ENCODE measurements at regions of chr13 and their contacts with region 1.

Region 1: GRCh38 chr13:41652727-41653361 is 195.5 kb downstream of the RGCC start:
- DNase-seq: no peak
- ATAC-seq: peak in 1 of 4 donors; percentile 66
- H3K4me3 ChIP-seq: no peak overlapping the region
- H3K27ac ChIP-seq: no peak overlapping the region
- H3K4me1 ChIP-seq: no peaks in the 10 kb centered on the region
- H3K27me3 ChIP-seq: no peaks in the 10 kb centered on the region
- CTCF ChIP-seq: peak; percentile 54

Region 2: GRCh38 chr13:41352935-41353840 is 299.7 kb before region 1 on chr13:
- intact Hi-C with region 1: loop called (anchors 5 to 10 kb)
- DNase-seq: no peak
- ATAC-seq: peak in 2 of 4 donors; percentile 48 to 49
- H3K4me3 ChIP-seq: no peak overlapping the region
- H3K27ac ChIP-seq: no peak overlapping the region
- H3K4me1 ChIP-seq: peaks cover 8% of the 10 kb centered on the region
- H3K27me3 ChIP-seq: no peaks in the 10 kb centered on the region
- CTCF ChIP-seq: peak; percentile 85

Region 3: GRCh38 chr13:41456768-41457588 is 195.9 kb before region 1 on chr13 and contains the start of gene RGCC:
- intact Hi-C with region 1: loop called (anchors 5 to 10 kb)
- DNase-seq: peak; percentile 79 to 83
- ATAC-seq: peak; percentile 70 to 75 (median 74)
- H3K4me3 ChIP-seq: peak within 1 kb of the TSS; percentile 79
- H3K27ac ChIP-seq: peak within 1 kb of the TSS; percentile 52
- H3K4me1 ChIP-seq: peaks cover 14% of the 10 kb centered on the region
- H3K27me3 ChIP-seq: peaks cover 0 to 56% (median 7%) of the 10 kb centered on the region in 3 donors
- CTCF ChIP-seq: no peak
- total RNA-seq, gene RGCC: 10.1 to 35.1 (median 28.4) TPM

Region 4: DNA sequence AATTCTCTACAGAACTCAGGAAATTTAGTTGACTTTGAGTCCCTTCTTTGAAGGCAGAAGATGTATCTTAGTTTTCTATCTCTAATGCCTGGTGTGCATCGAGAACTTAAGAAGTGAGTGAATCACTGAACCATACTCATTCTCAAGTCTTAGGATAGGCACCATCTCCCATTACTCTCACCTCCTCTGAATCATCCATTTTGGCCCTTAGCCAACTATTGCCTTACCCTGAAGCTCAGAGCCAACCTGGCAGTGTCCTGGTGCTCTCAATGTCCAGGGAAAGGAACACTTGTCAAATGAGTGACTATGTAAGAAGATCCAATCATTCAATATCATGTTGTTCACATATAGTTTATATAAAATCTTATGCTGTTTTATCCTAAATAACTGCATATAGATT is 48.9 kb before region 1 on chr13:
- intact Hi-C with region 1: no loop called
- DNase-seq: peak; percentile 33 to 72
- ATAC-seq: peak; percentile 97 to 99 (median 99)
- H3K4me3 ChIP-seq: no peak overlapping the region
- H3K27ac ChIP-seq: no peak overlapping the region
- H3K4me1 ChIP-seq: peaks cover 11% of the 10 kb centered on the region
- H3K27me3 ChIP-seq: no peaks in the 10 kb centered on the region
- CTCF ChIP-seq: no peak

Region 5: GRCh38 chr13:41613984-41614661 is 38.7 kb before region 1 on chr13:
- intact Hi-C with region 1: loop called in 1 of 2 experiments (anchors 5 kb)
- DNase-seq: peak; percentile 55 to 68
- ATAC-seq: peak; percentile 51 to 78 (median 72)
- H3K4me3 ChIP-seq: no peak overlapping the region
- H3K27ac ChIP-seq: peak overlapping the region; percentile 39
- H3K4me1 ChIP-seq: peaks cover 5% of the 10 kb centered on the region
- H3K27me3 ChIP-seq: no peaks in the 10 kb centered on the region
- CTCF ChIP-seq: no peak

Region 6: GRCh38 chr13:41774605-41775218 is 121.9 kb after region 1 on chr13:
- intact Hi-C with region 1: no loop called
- DNase-seq: no peak
- ATAC-seq: no peak
- H3K4me3 ChIP-seq: no peak overlapping the region
- H3K27ac ChIP-seq: no peak overlapping the region
- H3K4me1 ChIP-seq: no peaks in the 10 kb centered on the region
- H3K27me3 ChIP-seq: no peaks in the 10 kb centered on the region
- CTCF ChIP-seq: no peak